ENCODE measurements at regions of chr15 and their contacts with region 1.

Region 1: GRCh38 chr15:100873029-100873677 is 6.5 kb upstream of the ALDH1A3 start:
- DNase-seq: peak in 1 of 2 experiments; percentile 74
- H3K4me3 ChIP-seq: no peak overlapping the region
- H3K27ac ChIP-seq: no peak overlapping the region
- H3K4me1 ChIP-seq: peaks cover 0 to 6% (median 3%) of the 10 kb centered on the region in 4 experiments; a peak in 2 of 7 replicates
- H3K27me3 ChIP-seq: peaks cover 0 to 11% (median 8%) of the 10 kb centered on the region in 4 experiments; a peak in 6 of 7 replicates
- CTCF ChIP-seq: peak in 2 of 3 experiments; percentile 80 to 88; a peak in 3 of 4 replicates
- EP300 ChIP-seq: no peak
- POLR2A ChIP-seq: no peak
- RAD21 ChIP-seq: peak; percentile 71 to 77

Region 2: GRCh38 chr15:100635406-100636071 is 237.6 kb before region 1 on chr15:
- CTCF ChIA-PET with region 1: interaction called, 43 read pairs
- POLR2A ChIA-PET with region 1: no interaction called
- DNase-seq: peak in 1 of 2 experiments; percentile 15
- H3K4me3 ChIP-seq: no peak overlapping the region
- H3K27ac ChIP-seq: no peak overlapping the region
- H3K4me1 ChIP-seq: peaks cover 4 to 10% (median 6%) of the 10 kb centered on the region in 4 experiments; a peak in 5 of 7 replicates
- H3K27me3 ChIP-seq: no peaks in the 10 kb centered on the region
- CTCF ChIP-seq: no peak
- EP300 ChIP-seq: no peak
- POLR2A ChIP-seq: no peak
- RAD21 ChIP-seq: no peak

Region 3: DNA sequence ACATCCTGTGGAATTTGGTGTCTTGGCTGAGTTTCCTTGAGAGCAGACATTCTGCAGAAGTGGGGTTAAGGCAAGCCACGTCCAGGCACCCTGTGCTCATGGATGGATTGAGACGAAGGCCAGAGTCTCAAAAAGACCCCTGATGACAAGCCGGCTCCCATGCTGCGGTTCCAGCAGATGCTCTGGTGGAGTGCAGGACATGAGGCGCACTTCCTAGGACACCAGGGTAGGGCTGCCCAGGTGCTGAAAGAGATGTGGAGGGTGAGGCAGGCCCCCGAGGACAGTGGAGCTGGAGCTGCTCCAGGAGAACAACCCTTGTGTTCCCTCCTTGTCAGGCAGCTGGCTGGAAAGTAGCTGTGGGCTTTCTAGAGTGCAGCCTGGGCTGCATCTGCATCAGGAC is 189.7 kb before region 1 on chr15:
- CTCF ChIA-PET with region 1: interaction called, 12 read pairs
- POLR2A ChIA-PET with region 1: no interaction called
- DNase-seq: no peak
- H3K4me3 ChIP-seq: no peak overlapping the region
- H3K27ac ChIP-seq: no peak overlapping the region
- H3K4me1 ChIP-seq: peaks cover 3 to 7% (median 5%) of the 10 kb centered on the region in 4 experiments
- H3K27me3 ChIP-seq: 0 out of 7 replicates have a peak, but pooled peaks cover 0 to 2% (median 0%) of the 10 kb centered on the region in 4 experiments
- CTCF ChIP-seq: no peak
- EP300 ChIP-seq: no peak
- POLR2A ChIP-seq: no peak
- RAD21 ChIP-seq: no peak

Region 4: DNA sequence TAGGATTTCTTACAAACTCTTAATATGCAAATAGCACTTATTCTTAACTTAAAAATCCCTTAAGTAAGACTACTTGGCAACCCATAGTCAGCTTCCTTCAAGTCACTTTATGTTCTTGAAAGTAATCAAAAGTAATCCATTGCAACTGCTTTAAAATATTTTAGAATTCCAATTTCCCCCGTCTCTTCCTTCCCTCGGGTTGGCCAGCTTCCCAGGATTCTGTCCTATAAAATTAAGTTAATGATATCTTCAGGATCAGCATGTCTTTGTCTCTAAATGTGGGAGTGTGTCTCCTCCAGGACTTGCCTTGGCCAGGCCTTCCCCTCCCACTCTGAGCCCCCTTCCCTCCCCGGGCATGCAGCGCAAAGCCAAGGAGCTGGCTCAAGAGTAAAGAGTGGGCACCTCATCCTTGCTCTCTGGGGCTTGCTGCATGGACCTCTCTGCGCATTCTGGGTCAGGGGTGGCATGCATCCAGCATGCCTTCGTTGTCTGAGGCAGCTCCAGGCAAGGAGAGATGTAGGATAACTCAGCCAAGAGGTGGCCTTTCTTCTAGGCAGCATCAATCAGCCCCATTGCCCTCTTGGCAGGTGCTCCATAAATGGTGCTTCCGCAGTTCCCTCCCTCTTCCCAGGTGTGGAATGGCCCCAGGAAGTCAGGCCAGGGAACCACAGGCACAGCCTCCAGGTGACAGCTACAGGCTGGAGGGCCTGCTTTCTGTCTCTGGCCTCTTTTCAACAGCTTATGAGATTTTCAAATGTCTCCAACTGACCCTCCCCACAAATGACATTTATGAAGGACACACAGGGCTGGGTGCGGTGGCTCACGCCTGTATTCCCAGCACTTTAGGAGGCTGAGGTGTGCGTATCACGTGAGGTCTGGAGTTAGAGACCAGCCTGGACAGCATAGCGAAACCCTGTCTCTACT is 102.2 kb before region 1 on chr15:
- CTCF ChIA-PET with region 1: interaction called, 12 read pairs
- POLR2A ChIA-PET with region 1: no interaction called
- DNase-seq: no peak
- H3K4me3 ChIP-seq: no peak overlapping the region
- H3K27ac ChIP-seq: no peak overlapping the region
- H3K4me1 ChIP-seq: peaks cover 0 to 7% (median 1%) of the 10 kb centered on the region in 4 experiments; a peak in 4 of 7 replicates
- H3K27me3 ChIP-seq: no peaks in the 10 kb centered on the region
- CTCF ChIP-seq: no peak
- EP300 ChIP-seq: no peak
- POLR2A ChIP-seq: no peak
- RAD21 ChIP-seq: no peak

Region 5: GRCh38 chr15:100847194-100847593 is 26.0 kb before region 1 on chr15:
- CTCF ChIA-PET with region 1: interaction called, 29 read pairs
- POLR2A ChIA-PET with region 1: no interaction called
- DNase-seq: no peak
- H3K4me3 ChIP-seq: no peak overlapping the region
- H3K27ac ChIP-seq: no peak overlapping the region
- H3K4me1 ChIP-seq: no peaks in the 10 kb centered on the region
- H3K27me3 ChIP-seq: no peaks in the 10 kb centered on the region
- CTCF ChIP-seq: no peak
- EP300 ChIP-seq: no peak
- POLR2A ChIP-seq: no peak
- RAD21 ChIP-seq: no peak

Region 6: GRCh38 chr15:100902436-100903167 is 29.4 kb after region 1 on chr15:
- CTCF ChIA-PET with region 1: interaction called, 17 read pairs
- POLR2A ChIA-PET with region 1: no interaction called
- DNase-seq: no peak
- H3K4me3 ChIP-seq: no peak overlapping the region
- H3K27ac ChIP-seq: no peak overlapping the region
- H3K4me1 ChIP-seq: peaks cover 0 to 10% (median 3%) of the 10 kb centered on the region in 4 experiments; a peak in 5 of 7 replicates
- H3K27me3 ChIP-seq: no peaks in the 10 kb centered on the region
- CTCF ChIP-seq: no peak
- EP300 ChIP-seq: no peak
- POLR2A ChIP-seq: no peak
- RAD21 ChIP-seq: no peak

Measured in H1 (cell line).